ENCODE measurements at regions of chr16 and their contacts with region 1.

Region 1: DNA sequence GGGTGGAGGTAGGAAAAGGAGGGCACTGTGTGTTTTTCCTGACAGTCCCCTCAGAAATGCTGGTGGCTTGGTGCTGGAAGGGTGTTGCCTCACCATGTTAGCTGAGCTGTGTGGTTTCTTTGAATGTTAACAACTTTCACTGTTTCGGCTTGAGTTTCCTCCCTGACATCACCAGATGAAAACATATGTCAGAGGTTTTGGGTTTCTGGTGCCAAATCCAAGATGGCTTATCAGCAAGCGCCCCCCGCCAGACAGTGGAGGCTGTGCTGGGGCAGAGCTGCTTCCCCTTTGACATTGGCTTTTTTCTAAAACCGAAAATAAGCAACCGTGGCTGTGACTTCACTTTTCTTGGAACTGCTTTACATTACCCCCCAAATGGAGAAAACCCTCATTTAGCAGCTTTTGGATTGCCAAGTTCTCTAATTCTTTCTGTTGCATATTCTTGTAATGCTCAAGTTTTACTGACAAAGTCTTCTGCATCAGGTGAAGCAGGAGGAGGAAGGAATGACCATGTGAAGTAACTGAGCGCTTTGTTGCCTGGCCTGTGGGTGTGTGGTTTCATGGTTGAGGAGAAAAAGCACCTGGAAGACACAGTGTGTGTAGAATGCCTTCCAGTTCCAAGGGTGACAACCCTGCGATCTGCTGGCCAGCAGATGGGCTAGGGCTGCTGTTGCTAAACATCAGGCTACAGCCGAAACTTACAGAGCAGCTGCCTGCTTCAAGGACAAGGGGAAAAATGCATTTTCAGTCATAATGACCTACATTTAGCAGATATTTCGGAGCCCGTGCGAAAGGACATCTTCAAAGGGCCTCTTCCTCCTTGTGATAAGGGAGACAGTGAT is 9.7 kb downstream of the RMI2 start:
- DNase-seq: peak; percentile 80
- H3K4me3 Mint-ChIP-seq: peak overlapping the region; percentile 71
- H3K27ac Mint-ChIP-seq: peak overlapping the region; percentile 83
- H3K4me1 Mint-ChIP-seq: peaks cover 64% of the 10 kb centered on the region
- H3K27me3 Mint-ChIP-seq: peaks cover 4% of the 10 kb centered on the region

Region 2: DNA sequence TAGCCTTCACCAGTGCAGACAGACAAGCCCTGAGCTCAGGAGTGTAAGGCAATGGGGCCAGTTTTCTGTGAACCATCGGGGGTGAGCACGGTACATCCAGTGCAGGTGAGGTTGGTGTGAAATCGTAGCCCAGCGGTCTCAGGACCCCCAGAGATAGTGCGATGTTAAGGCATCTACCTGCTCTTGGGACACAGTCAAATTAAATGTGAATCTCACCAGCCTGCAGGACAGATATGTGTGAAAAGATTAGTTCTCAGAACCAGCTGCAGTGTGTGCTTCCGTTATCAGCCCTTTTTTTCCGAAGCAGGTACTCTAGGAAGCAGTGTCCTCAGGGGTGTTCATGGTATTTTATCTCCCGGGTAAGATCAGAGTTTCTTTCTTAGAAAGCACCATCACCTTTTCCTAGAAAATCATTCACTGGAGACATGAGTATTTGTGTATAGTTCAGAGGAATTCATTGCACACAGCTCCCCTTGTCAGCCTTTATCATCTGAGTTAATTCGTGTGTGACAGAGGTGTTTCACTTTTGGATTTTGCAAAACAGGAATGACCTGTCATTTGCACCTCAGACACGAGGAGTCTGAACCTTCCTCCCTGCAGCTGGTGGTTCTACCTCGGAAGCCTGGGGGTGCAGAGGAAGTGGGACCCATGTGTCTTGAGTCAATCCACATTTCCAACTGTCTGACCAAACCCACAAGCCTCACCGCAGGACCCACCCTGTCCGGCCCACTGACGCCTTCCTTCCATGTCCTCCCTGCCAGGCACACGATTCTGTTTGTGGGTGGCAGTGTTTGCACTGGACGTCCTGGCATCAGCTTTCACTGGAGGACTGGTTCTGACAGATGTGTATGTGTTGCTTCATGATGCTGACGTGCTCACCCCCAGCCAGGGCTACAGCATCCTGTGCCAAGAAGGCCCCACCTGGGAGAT is 302.8 kb before region 1 on chr16:
- intact Hi-C with region 1: loop called (anchors 2 kb)
- DNase-seq: peak; percentile 75
- H3K4me3 Mint-ChIP-seq: peak overlapping the region; percentile 60
- H3K27ac Mint-ChIP-seq: peak overlapping the region; percentile 83
- H3K4me1 Mint-ChIP-seq: peaks cover 68% of the 10 kb centered on the region
- H3K27me3 Mint-ChIP-seq: no peaks in the 10 kb centered on the region

Region 3: GRCh38 chr16:11094072-11094856 is 260.7 kb before region 1 on chr16:
- intact Hi-C with region 1: loop called (anchors 1 kb)
- DNase-seq: peak; percentile 56
- H3K4me3 Mint-ChIP-seq: peak overlapping the region; percentile 68
- H3K27ac Mint-ChIP-seq: peak overlapping the region; percentile 100
- H3K4me1 Mint-ChIP-seq: peaks cover 70% of the 10 kb centered on the region
- H3K27me3 Mint-ChIP-seq: no peaks in the 10 kb centered on the region

Region 4: DNA sequence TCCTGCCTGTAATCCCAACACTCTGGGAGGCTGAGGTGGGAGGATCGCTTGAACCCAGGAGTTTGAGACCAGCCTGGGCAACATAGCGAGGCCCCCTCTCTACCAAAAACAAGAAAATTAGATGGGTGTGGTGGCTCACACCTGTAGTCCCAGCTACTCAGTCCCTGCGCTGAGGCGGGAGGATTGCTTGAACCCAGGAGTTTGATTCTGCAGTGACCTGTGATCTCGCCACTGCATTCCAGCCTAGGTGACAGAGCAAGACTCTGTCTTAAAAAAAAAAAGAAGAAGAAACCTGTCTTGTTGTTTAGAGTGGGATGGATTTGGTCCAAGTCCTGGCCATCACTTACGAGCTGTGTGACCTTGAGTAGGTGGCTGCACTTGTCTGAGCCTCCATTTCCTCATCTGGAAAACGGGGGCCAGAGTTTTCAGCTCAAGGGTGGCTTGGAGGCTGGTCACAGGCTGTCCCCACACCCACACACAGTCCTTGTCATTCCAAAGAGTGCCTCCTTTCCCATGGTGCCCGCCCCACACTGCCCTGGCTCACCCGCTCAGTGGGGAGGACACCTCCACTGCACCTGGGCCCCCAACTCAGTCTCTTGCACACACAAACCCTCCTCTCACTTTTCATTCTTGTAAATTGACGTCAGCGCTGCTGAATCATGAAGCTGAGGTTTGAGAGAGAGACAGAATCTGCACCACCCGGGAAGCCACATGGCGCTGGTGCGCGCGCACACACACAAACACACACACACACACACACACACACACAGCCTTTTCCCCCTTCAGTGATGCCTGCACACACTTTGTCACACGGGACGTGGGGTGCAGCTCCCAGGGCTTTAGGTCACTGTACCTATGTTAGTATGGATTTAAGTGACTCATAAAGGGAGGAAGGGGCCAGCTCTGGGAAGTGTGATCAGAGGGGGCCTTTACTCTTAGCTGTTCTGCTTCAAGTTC is 103.2 kb before region 1 on chr16:
- intact Hi-C with region 1: no loop called
- DNase-seq: peak; percentile 76
- H3K4me3 Mint-ChIP-seq: peak overlapping the region; percentile 99
- H3K27ac Mint-ChIP-seq: peak overlapping the region; percentile 90
- H3K4me1 Mint-ChIP-seq: peaks cover 32% of the 10 kb centered on the region
- H3K27me3 Mint-ChIP-seq: no peaks in the 10 kb centered on the region

Region 5: DNA sequence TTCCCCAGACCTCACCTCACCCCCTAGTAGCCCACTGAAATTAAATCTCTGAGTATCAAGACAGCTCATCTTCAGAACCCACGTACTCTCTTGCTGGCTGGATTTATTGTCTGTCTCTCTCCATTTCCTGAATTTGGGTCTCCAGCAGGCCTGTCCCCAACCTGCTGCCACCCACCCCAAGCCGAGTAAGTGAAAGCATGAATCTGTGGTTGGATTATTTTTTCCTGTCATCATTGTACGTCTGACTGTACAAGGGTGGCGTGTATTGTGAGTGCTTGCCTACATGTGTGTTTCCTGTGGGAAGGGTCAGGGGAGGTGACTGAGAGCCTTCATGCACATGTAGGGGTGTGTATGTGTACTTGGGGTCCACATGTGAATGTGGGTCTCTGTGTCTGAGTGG is 91.2 kb before region 1 on chr16:
- intact Hi-C with region 1: loop called (anchors 1 kb)
- DNase-seq: peak; percentile 41
- H3K4me3 Mint-ChIP-seq: no peak overlapping the region
- H3K27ac Mint-ChIP-seq: peak overlapping the region; percentile 82
- H3K4me1 Mint-ChIP-seq: peaks cover 41% of the 10 kb centered on the region
- H3K27me3 Mint-ChIP-seq: peaks cover 12% of the 10 kb centered on the region

Region 6: DNA sequence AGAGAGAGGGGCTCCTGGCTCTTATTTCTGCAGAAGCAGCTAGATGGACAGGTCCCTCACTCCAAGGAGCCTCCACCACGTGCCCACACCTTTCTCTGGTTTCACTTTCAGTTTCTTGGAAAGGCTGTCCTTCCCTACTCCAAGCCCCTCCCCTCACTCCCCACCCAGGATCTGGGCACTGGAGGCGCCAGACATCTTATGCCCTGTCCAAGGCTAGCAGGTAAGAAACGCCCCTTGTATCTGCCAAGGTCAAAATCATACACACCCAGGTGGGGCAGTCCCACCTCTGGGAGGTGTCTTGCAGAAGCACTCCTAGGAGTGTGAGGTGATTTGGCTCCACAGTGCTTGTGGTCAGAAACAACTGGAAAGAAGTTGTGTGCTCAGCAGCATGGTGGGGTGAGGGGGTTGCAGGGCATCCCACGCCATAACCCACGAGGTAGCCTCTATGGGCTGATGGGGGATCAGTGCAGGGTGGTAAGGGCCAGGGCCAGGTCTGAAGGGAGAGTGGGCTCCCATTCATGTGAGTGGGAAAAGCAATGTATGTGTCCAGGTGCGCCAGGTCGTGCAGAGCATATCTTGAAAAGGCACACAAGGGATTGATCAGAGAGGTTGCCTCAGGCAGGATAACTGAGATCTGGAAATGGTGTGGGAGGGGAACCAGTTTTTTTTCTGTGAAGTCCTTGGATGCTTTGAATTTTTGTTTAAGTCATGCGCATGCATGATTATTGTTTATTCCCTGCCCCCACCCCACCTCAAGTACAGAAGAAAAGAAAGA is 42.0 kb before region 1 on chr16:
- intact Hi-C with region 1: loop called (anchors 1 kb)
- DNase-seq: peak; percentile 38
- H3K4me3 Mint-ChIP-seq: peak overlapping the region; percentile 27
- H3K27ac Mint-ChIP-seq: peak overlapping the region; percentile 57
- H3K4me1 Mint-ChIP-seq: peaks cover 61% of the 10 kb centered on the region
- H3K27me3 Mint-ChIP-seq: peaks cover 3% of the 10 kb centered on the region

Region 7: DNA sequence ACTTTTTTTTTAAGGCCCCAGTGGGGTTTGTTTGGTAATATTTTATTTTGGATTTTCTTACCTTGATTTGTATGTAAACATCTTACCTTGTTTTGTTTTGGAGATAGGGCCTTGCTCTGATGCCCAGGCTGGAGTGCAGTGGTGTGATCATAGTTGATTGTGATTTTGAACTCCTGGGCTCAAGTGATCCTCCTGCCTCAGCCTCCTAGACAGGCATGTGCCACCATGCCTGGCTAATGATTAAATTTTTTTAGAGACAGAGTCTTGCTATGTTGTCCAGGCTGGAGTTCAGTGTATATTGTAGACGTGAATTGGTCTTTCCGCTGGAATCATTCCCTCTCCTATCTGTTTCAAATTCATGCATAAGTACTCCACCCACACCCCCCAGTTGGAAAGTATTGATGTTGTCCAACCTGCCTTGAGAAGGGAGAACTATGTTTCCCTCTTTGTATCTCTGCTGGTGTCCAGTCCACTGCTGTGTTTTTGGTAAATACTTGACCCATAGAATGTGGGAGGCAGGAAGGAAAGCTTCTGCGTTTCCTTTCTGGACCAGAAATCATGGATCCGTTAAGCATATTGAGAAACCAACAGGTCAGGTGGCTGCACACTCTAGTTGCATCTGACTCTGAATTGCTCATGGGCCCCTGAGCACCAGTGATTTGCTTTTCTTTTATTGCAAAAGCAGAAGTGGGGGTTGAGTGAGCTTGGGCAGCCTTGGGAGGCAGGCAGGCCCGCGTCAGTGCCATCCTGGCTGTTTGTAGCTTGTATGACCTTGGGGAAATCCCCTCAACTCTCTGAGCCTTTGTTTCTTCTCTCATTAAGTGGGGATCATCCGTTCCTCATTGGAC is 15.4 kb after region 1 on chr16:
- intact Hi-C with region 1: loop called (anchors 1 kb)
- DNase-seq: no peak
- H3K4me3 Mint-ChIP-seq: no peak overlapping the region
- H3K27ac Mint-ChIP-seq: peak overlapping the region; percentile 61
- H3K4me1 Mint-ChIP-seq: peaks cover 21% of the 10 kb centered on the region
- H3K27me3 Mint-ChIP-seq: peaks cover 10% of the 10 kb centered on the region

Measured in activated T-helper 1 cell treated with anti-CD3 and anti-CD28 coated beads, Interleukin-12 subunit alpha, Interleukin-12 subunit beta, Interleukin-2, Interleukin-4 antibody, amounts not matched to agents 30 ng/mL and 10 ng/mL and 1 ng/mL, durations not matched to agents 14 hours and 24 hours and 36 hours (primary cell).